ENCODE measurements at regions of chr1 and their contacts with region 1.

Region 1: DNA sequence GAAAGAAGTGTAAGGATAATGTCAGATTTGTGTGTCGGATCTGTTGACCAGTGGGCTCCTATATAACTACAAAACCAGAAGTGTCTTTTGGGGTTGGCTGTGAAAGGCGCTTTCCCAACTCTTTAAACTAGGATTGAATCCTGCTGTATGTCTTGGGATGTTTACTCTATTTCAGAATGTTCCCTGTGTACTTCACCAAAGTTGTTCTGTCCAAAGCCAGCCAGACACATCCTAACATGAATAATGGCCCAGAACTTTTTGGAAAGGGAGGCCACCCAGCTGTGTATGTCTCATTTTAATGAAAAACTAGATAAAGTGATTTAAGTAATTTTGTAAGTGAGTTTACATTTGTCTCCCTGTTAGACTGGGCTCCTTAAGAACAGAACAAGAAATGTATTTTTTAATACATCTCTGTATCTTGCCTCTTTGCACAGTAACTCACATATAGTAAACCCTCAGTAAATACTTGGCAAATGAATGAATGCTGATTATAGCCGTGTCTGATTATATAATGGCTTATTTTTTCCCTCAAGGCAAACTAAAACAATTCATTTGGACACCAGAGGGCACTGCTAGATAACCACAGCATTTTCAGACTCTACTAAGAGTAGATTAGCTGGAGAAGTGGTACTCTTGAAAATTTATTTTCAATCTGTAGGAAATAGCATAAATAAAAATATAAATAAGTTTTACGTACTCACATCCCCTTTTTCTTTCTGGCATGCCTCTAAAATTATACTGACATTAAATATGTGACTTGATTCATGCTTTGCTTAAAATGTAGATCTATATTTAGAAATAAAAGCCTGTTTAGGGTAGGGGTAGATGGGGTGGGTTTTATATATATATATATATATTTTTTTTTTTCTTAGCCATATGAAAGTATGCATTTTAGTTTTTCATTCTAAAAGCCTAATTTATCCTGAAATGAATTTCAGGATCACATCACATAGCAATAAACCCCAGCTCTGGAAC is 23.8 kb downstream of the TSEN15 start:
- DNase-seq: peak; percentile 37
- H3K4me3 ChIP-seq: no peak overlapping the region; a peak in 1 of 4 replicates
- H3K27ac ChIP-seq: peak overlapping the region in 1 of 2 experiments; percentile 39; a peak in 1 of 4 replicates
- H3K4me1 ChIP-seq: peaks cover 0 to 13% of the 10 kb centered on the region in 2 experiments; a peak in 2 of 4 replicates
- H3K27me3 ChIP-seq: no peaks in the 10 kb centered on the region
- CTCF ChIP-seq: peak; percentile 83
- EP300 ChIP-seq: no peak
- RAD21 ChIP-seq: peak; percentile 96

Region 2: DNA sequence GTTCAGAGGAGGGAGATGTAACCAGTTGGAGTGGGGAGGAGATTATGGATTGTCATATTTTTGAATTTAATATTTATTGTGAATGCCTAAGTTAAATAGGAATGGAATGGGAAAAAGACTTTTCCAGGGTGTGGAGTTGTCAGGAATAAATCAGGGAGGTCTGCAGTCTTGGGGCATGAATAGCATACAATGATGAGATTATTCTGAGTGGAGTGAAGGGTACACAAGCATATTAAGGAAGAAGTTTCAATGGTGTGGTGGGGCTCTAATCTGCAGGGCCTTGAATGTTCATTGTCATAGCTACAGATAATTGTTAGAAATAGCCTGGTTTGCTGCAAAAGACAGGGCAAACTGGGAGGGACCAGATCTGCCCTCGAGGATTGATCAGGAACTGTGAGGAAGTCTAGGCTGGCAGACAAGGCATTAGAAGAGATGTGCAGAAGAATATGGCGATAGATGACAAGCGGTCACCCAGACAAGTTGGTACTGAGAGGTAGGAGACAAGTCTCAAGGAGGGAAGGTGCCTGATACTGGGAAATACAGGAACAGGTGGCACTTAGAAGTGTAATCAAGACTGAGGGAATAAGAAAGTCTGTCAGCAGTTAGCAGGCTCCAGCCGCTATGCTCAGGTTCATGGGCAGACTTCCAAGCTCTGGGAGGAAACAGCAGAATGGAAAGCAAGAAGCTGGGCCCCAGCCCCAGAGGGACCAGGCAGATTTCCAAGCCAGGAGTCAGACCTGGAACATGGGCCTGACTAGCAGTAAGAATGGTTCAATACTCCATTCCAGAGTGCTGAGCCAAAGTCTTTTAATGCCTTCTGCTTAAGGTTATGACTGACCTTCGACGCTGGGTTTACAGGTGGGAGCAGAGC is 291.3 kb before region 1 on chr1:
- CTCF ChIA-PET with region 1: no interaction called
- POLR2A ChIA-PET with region 1: no interaction called
- DNase-seq: no peak
- H3K4me3 ChIP-seq: no peak overlapping the region
- H3K27ac ChIP-seq: peak overlapping the region; percentile 22 to 77; a peak in 3 of 4 replicates
- H3K4me1 ChIP-seq: peaks cover 20% of the 10 kb centered on the region in 2 experiments
- H3K27me3 ChIP-seq: no peaks in the 10 kb centered on the region
- CTCF ChIP-seq: no peak
- EP300 ChIP-seq: peak in 1 of 2 experiments; percentile 25; a peak in 1 of 4 replicates
- RAD21 ChIP-seq: no peak

Region 3: DNA sequence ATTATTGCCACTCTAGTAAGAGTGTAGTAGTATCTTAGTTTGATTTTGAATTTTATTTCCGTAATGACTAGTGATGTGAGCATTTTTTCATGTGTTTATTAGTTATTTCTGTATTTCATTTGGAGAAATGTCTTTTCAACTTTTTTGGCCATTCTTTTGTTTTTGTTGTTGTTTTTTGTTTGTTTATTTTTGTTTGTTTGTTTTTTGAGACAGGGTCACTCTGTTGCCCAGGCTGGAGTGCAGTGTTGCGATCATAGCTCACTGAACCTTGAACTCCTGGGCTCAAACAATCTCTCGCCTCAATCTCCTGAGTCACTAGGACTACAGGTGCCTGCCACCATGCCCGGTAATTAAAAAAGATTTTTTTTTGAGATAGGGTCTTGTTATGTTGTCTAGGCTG is 52.2 kb after region 1 on chr1:
- CTCF ChIA-PET with region 1: no interaction called
- POLR2A ChIA-PET with region 1: no interaction called
- DNase-seq: no peak
- H3K4me3 ChIP-seq: no peak overlapping the region
- H3K27ac ChIP-seq: no peak overlapping the region
- H3K4me1 ChIP-seq: no peaks in the 10 kb centered on the region
- H3K27me3 ChIP-seq: no peaks in the 10 kb centered on the region
- CTCF ChIP-seq: no peak
- EP300 ChIP-seq: no peak
- RAD21 ChIP-seq: no peak

Region 4: DNA sequence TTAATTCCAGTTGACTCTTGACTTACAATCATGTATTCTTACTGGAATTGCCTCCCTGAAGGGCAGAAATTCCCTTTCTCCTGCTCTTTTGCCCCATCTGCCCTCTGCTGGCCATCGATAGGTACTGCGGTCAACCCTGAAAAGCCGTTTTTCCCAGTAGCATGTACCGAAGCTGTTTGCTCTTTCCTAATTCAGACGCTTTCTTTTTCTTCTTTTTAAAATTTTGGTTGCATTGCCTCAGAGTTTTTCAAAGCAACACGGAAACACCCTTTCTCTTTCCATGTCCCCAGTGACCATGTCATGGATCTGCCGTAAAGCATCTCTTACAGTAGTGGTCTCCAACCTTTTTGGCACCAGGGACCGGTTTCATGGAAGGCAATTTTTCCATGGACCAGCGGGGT is 147.3 kb after region 1 on chr1:
- CTCF ChIA-PET with region 1: interaction called, 14 read pairs
- POLR2A ChIA-PET with region 1: no interaction called
- DNase-seq: peak; percentile 43
- H3K4me3 ChIP-seq: no peak overlapping the region; a peak in 1 of 4 replicates
- H3K27ac ChIP-seq: no peak overlapping the region
- H3K4me1 ChIP-seq: peaks cover 0 to 4% of the 10 kb centered on the region in 2 experiments; a peak in 1 of 4 replicates
- H3K27me3 ChIP-seq: no peaks in the 10 kb centered on the region
- CTCF ChIP-seq: peak; percentile 93
- EP300 ChIP-seq: no peak
- RAD21 ChIP-seq: peak; percentile 75

Region 5: DNA sequence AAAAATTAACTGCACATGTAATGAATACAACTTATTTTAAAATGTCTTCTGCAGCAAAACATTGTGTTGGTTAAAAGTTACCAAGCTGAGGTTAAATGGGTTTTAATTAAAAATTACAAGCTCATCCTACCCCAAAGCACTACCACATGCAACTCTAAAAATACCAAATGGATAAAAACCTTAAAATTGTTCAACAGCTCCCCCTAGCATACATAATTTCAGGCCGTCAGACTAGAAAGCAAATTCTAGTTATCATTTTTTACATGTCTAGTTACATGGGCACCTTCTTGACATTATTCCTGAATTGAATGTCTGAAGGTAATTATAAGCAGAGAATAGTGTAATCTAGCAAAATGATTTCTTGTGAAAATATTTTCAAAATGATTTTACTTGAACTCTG is 488.0 kb after region 1 on chr1:
- CTCF ChIA-PET with region 1: interaction called, 22 read pairs
- POLR2A ChIA-PET with region 1: no interaction called
- DNase-seq: peak; percentile 34
- H3K4me3 ChIP-seq: no peak overlapping the region
- H3K27ac ChIP-seq: no peak overlapping the region
- H3K4me1 ChIP-seq: peaks cover 6 to 7% of the 10 kb centered on the region in 2 experiments; a peak in 3 of 4 replicates
- H3K27me3 ChIP-seq: no peaks in the 10 kb centered on the region
- CTCF ChIP-seq: peak; percentile 66
- EP300 ChIP-seq: no peak
- RAD21 ChIP-seq: peak; percentile 87

Region 6: GRCh38 chr1:184691719-184692324 is 616.5 kb after region 1 on chr1:
- CTCF ChIA-PET with region 1: interaction called, 11 read pairs
- POLR2A ChIA-PET with region 1: no interaction called
- DNase-seq: peak; percentile 36
- H3K4me3 ChIP-seq: no peak overlapping the region; a peak in 1 of 4 replicates
- H3K27ac ChIP-seq: no peak overlapping the region; a peak in 1 of 4 replicates
- H3K4me1 ChIP-seq: peaks cover 2 to 6% of the 10 kb centered on the region in 2 experiments; a peak in 2 of 4 replicates
- H3K27me3 ChIP-seq: no peaks in the 10 kb centered on the region
- CTCF ChIP-seq: peak; percentile 91
- EP300 ChIP-seq: no peak
- RAD21 ChIP-seq: peak; percentile 87

Measured in SK-N-SH (cell line).